Adrenal gland (tissue), 19 donors: ENCODE measurements at regions of chr5 and their contacts with region 1.

Region 1: DNA sequence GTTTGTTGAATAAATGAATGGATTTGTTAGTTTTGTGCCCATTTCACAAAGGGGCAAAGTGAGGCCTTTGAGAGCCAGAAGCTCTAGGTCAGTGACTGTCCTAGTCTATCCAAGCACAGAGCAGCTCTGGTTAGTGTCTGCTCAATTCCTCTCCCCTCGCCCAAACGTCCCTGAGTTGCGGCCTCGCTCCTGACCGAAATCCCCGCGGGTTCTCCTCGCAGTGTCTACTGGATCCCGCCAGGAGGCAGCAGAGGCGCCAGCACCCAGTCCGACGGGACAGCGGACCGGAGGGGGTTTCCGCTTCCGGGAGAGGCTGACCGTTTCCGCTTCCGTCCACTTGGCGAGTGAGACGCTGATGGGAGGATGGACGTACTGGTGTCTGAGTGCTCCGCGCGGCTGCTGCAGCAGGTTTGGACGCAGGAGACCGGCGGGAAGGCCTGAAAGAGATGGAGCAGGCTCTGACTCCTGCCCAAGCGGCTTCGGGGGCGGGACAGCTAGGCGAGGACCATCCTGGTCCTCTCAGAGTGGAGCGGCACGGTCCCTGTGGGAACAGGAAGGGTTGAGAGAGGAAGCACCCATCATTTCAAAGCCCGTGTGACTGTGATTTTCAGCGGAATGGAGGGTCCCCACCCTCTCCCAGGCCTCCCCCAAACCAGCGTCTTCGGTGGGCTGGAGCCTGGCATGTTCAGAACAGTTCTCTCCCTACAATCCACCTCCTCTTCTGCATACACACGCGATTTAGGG is at the start of gene RARS1:
- DNase-seq: peak; percentile 93 to 96 (median 95)
- H3K4me3 ChIP-seq: peak within 1 kb of the TSS; percentile 63 to 92 (median 82)
- H3K27ac ChIP-seq: peak within 1 kb of the TSS in 4 of 5 donors; percentile 7 to 78 (median 46)
- H3K4me1 ChIP-seq: peaks cover 0 to 13% of the 10 kb centered on the region in 2 donors
- H3K27me3 ChIP-seq: no peaks in the 10 kb centered on the region
- CTCF ChIP-seq: peak; percentile 93 to 98 (median 96)
- POLR2A ChIP-seq: peak; percentile 70 to 75
- total RNA-seq, gene RARS1: 40.3 to 114 (median 66.1) TPM

Region 2: DNA sequence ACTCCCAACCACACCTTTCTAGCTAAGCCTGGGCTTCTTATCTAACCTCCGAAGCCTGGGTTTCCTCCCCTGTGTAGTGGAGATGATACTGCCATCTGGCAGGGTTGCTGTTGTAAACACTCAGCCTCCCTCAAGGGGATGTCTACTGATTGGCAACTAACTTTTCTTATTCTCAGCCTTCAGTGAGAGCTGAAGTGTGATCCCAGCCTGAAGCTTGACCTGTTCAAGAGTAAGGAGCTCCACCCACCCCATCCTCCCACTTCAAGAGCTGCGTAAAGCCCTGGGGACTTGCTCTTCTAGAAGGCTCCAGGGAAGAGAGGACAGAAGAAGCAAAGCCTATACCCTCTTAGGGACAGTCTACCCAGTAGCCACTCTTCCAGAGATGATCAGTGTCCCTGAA is 216.3 kb before region 1 on chr5:
- intact Hi-C with region 1: loop called in 1 of 2 experiments (anchors 5 kb)
- DNase-seq: no peak
- H3K4me3 ChIP-seq: no peak overlapping the region
- H3K27ac ChIP-seq: no peak overlapping the region
- H3K4me1 ChIP-seq: peaks cover 0 to 9% of the 10 kb centered on the region in 2 donors
- H3K27me3 ChIP-seq: no peaks in the 10 kb centered on the region
- CTCF ChIP-seq: no peak
- POLR2A ChIP-seq: no peak